Left cardiac atrium (tissue), 4 donors: ENCODE measurements at regions of chr9 and their contacts with region 1.

Region 1: DNA sequence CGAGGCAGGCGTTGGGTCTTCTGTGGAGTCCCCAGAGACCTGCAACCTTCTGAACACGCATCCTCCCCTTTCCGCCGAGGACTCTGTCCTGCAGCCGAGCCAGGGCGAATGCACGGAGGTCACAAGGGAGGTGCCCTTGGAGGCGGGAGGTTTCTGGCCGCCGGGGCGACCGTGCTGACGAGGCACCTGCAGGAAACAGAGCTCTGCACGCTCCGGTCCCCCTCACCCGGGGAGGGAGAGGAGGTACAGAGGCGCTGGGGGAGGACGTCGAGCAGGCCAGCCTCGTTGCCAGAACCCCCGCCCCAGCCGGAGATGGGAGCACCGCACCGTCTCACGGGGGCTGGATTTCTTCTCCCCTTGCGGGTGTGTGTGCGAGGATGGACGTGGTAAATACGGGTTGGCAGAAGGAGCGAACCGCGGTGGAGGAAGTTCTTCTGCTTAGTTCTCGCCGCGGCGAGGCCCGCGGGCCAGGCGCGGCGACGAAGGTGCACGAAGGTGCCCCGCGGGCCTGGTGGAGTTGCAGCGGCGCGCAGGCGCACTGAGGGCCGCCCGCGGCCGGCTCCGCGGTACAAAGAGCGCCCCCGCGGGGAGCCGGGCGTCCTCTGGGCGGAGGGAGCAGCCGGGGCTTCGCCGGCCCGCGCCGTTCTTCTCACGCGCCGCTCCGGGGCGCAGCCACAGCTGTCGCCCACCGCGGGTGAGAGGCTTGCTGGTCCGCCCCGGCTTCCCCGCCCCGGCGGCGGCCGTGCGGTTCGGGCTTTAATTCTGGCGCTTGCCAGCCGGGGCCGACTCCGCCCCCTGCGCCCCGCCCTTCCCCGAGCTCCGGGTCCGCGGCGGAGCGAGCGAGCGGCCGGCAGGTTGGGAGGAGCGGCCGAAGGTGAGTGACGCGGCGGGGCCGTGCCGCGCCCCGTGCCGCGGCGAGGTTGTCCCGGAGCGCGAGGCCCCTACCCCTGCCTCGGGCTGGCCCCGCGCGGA is 289.5 kb downstream of the DOCK8 start:
- DNase-seq: peak; percentile 84
- ATAC-seq: peak; percentile 89 to 90

Region 2: GRCh38 chr9:419571-420402 is 84.4 kb before region 1 on chr9:
- intact Hi-C with region 1: loop called in 1 of 2 experiments (anchors 10 kb)
- DNase-seq: no peak
- ATAC-seq: peak in 1 of 2 donors; percentile 76

Region 3: GRCh38 chr9:546797-547223 is 42.6 kb after region 1 on chr9:
- intact Hi-C with region 1: loop called in 1 of 2 experiments (anchors 5 kb)
- DNase-seq: no peak
- ATAC-seq: peak; percentile 61 to 82

Region 4: DNA sequence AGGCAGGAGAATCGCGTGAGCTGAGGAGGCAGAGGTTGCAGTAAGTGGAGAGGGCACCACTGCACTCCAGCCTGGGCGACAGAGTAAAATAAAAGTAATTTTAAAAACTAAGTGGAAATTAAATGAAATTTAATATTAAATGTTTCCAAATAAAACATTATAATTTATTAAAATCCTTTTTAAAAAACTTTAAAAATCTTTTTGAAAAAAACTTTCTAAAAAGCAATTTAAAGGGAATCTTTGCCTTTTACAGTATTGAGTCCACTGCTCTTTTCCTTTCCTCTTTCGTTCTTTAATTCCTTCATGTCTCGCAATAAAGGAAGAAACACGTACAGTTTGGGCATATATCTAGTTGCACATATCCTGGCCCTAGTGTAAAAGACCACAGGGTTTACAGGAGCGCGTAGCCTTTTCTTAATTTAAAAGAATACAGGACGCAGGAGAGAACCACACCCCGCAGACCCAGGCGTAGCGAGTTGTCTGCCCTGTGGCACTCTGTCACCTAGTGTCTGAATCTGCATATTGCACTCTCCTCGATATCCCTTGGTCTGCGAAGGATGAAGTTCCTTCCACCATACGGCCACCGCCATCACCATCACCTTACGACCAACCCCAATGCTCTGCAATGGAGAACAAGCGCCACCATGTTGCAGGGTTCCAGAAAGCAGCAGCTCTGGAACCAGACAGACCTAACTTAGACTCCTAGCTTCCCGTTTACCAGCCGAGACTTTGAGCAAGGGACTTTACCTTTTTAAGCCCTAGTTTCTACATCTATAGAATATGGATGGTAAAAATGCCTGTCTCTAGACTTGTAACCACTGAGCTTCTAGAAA is 259.7 kb after region 1 on chr9:
- intact Hi-C with region 1: loop called in 1 of 2 experiments (anchors 5 kb)
- DNase-seq: peak; percentile 73
- ATAC-seq: peak; percentile 96 to 98

Region 5: DNA sequence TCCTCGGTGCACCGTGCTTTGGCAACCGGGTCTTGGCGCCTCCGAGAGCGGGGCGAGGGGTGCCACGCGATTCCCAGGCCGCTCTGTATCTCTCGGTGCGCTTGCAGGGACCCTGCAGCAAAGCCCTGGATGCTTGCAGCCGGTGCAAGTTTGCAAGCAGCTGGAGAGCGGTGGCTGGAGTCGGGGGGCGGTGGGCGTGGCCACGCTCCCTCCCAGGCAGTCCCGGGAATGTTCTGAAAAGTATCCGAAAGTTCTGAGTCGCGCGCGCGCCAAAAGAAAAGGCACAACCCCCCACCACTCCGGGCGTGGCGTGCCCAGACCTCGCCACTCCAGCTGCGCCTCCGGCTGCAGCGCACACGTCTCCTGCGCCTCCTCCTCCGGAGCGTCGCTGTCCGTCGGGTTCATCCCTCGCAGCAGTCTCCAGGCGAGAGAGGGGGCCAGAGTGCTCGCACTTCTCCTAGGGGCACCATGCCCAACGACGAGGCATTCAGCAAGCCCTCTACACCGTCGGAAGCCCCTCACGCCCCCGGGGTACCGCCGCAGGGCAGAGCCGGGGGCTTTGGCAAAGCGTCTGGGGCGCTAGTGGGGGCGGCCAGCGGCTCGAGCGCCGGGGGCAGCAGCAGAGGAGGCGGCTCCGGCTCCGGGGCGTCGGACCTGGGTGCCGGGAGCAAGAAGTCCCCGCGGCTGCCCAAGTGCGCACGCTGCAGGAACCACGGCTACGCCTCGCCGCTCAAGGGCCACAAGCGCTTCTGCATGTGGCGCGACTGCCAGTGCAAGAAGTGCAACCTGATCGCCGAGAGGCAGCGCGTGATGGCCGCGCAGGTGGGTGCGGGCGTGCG is 337.4 kb after region 1 on chr9 and contains the start of gene DMRT1:
- intact Hi-C with region 1: no loop called
- DNase-seq: no peak
- ATAC-seq: no peak
- total RNA-seq, gene DMRT1: not detected